Psoas muscle (tissue), 8 donors: ENCODE measurements at regions of chr17 and their contacts with region 1.

Region 1: DNA sequence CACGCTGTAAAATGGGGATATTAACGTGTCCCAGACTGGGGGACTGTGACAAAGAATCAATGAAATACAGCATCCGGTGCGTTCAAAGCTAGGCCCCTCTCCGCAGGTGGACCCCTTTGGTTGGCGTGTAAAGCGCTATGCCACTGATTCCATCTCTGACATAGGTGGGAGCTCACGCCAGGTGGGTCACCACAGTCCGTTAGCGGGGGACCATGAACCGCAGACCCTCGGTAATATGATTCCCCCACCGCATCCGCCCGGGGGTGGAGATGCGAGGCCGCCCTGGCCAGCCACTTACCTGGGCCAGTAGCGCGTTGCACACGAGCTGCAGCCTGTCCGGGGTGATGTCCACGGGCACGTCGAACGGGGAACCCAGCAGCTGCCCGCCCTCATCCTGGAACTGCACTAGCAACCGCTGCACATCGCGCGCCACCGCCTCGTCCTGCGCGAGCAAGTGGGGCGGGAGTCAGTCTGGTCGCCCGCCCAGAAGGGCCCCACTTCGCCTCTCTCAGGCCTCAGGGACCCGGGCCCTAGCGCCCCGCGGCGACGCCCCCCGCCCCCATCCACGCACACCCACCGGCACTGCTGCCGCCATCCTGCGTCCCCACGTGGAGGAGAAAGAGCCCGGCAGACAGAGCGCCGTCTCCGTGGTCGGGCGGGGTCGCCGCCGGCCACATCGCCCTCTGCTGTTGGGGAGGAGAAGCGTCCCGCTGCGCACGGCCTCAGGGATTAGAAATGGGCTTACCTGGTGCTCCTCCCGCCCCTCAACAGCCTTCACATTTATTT is at the start of gene NLE1:
- DNase-seq: peak; percentile 83 to 92
- ATAC-seq: peak; percentile 89 to 96 (median 94)
- H3K4me3 ChIP-seq: peak within 1 kb of the TSS; percentile 85
- H3K27ac ChIP-seq: peak within 1 kb of the TSS; percentile 67
- H3K4me1 ChIP-seq: peaks cover 22% of the 10 kb centered on the region
- H3K27me3 ChIP-seq: no peaks in the 10 kb centered on the region
- CTCF ChIP-seq: peak; percentile 90
- total RNA-seq, gene NLE1: 9.8 to 11.9 (median 10.2) TPM

Region 2: GRCh38 chr17:35022536-35023063 is 119.3 kb before region 1 on chr17:
- intact Hi-C with region 1: no loop called
- DNase-seq: peak; percentile 72 to 79
- ATAC-seq: peak; percentile 82 to 94 (median 93)
- H3K4me3 ChIP-seq: no peak overlapping the region
- H3K27ac ChIP-seq: peak overlapping the region; percentile 50
- H3K4me1 ChIP-seq: peaks cover 13% of the 10 kb centered on the region
- H3K27me3 ChIP-seq: no peaks in the 10 kb centered on the region
- CTCF ChIP-seq: no peak

Region 3: DNA sequence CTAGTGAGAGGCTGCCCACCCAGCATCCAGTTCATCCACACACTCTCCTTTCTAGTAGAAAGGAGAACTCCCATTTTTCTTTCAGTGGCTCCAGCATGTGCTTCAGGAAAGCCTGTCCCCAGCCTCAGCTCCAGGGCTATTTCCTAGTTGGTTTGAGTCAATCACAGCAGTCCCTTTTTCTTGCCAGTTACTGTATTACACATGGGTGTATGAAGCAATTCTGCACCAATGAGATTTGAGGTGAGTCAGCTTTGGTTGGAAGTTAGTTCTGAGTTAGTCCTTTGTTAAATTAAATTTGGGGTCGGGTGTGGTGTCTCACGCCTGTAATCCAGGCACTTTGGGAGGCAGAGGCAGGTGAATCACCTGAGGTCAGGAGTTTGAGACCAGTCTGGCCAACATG is 47.0 kb before region 1 on chr17:
- intact Hi-C with region 1: no loop called
- DNase-seq: no peak
- ATAC-seq: peak in 3 of 4 donors; percentile 47 to 58 (median 56)
- H3K4me3 ChIP-seq: no peak overlapping the region
- H3K27ac ChIP-seq: no peak overlapping the region
- H3K4me1 ChIP-seq: no peaks in the 10 kb centered on the region
- H3K27me3 ChIP-seq: no peaks in the 10 kb centered on the region
- CTCF ChIP-seq: no peak

Region 4: GRCh38 chr17:35127751-35128514 is 13.9 kb before region 1 on chr17:
- intact Hi-C with region 1: no loop called
- DNase-seq: peak in 1 of 2 donors; percentile 22
- ATAC-seq: peak in 1 of 4 donors; percentile 33
- H3K4me3 ChIP-seq: no peak overlapping the region
- H3K27ac ChIP-seq: no peak overlapping the region
- H3K4me1 ChIP-seq: no peaks in the 10 kb centered on the region
- H3K27me3 ChIP-seq: no peaks in the 10 kb centered on the region
- CTCF ChIP-seq: no peak

Region 5: GRCh38 chr17:35537601-35538141 is 395.8 kb after region 1 on chr17 and contains the start of gene SLFN12L:
- intact Hi-C with region 1: loop called in 1 of 2 experiments (anchors 10 kb)
- DNase-seq: no peak
- ATAC-seq: no peak
- H3K4me3 ChIP-seq: peak within 1 kb of the TSS; percentile 20
- H3K27ac ChIP-seq: peak within 1 kb of the TSS; percentile 19
- H3K4me1 ChIP-seq: no peaks in the 10 kb centered on the region
- H3K27me3 ChIP-seq: peaks cover 0 to 3% (median 0%) of the 10 kb centered on the region in 3 donors
- CTCF ChIP-seq: no peak
- total RNA-seq, gene SLFN12L: 0.17 to 0.30 (median 0.26) TPM in 3 of 4 donors, not detected in the other